GM13977 (cell line): ENCODE measurements at regions of chr5 and their contacts with region 1.

Region 1: DNA sequence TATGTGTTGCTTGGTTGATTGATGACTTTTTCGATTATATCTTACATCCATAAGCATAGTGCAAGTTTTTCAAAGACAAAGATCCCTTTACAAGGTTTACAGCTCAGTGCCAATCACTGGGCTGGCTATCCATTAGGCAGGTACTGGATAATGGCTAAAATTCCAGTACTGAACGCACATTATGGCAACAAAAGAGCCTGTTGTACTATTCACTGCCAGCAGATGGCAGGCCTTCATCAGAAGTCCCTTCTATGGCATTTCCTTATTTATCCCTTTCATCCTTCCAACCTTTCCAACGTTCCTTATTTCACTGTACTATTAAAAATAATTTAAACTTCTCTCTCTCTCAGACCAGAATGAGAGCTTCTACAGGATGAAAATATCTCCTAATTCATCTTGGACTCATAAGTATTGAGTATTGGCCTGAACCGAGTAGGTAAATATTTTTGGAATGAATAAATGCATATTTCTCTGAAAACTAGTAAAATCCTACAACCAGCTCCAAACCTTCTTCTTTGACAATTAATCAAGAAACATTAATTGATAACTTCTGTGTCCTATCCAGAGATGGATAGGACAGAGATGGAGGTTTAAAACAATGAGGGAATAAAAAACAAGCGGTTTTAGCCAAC is 6.7 kb upstream of the WNT8A start:
- DNase-seq: peak; percentile 73
- CTCF ChIP-seq: peak; percentile 79

Region 2: DNA sequence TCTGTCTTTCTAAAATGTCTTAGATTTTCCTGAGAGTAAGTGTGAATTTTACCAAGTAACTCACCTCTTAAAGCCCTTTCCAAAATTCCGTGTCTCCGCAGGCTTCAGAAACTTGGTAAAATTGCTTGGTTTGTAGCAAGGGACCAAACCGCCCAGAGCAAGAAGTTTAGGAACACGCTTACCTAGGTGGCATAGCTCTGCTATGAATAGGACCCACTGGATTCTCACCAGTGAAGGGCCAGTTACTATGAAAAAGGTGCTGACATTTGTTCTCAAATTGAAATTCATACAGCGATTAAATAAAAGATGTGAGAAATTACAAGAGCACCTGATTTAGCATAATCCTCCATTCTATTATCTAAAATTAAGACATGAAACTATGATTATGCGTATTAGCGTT is 55.4 kb after region 1 on chr5:
- in situ Hi-C with region 1: loop called (anchors 5 kb)
- DNase-seq: no peak
- CTCF ChIP-seq: no peak